ENCODE measurements at regions of chr2 and their contacts with region 1.

Region 1: GRCh38 chr2:240832205-240832727 is 12.2 kb upstream of the KIF1A start:
- DNase-seq: peak; percentile 90 to 99 (median 97)
- H3K4me3 ChIP-seq: peak overlapping the region; percentile 23 to 73 (median 56)
- H3K27ac ChIP-seq: peak overlapping the region in 47 of 59 donors; percentile 10 to 80 (median 64)
- H3K27me3 ChIP-seq: no peaks in the 10 kb centered on the region
- CTCF ChIP-seq: peak in 6 of 56 donors; percentile 5 to 23 (median 10)

Region 2: DNA sequence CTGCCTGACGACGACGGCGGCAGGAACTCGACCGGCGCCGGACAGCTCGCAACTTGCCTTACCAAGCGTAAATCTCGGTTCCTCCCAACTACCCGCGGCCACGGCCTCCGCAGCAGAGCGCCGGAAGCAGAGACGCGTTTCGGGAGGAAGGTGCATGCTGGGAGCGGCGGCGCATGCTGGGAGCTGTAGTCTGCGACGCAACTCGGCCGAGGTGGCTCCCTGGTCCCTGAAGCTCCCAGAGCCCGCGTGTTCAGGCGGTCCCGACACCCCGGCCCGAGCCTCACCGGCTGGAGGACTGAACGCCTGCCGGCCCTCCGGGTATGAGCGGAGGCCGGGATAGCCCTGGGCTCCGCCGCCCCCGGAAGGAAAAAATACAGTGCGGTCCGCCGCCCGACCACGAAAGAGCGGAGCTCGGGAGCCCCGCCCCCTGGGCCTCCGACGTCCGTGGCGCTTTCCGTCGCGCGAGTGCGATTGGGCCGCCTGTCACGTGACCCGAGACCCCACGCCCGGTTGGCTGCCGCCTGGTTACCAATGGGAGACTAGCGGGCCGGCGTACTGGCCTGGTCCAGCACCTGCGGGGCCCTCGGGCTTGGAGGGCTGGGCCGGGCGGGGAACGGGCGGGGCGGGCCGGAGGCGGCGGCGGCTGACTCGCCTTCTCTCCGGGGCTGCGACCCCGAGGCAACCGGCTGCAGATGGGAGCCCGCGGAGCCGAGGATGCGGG is 245.9 kb before region 1 on chr2 and contains the start of gene CAPN10:
- intact Hi-C with region 1: loop called in 1 of 2 experiments (anchors 5 kb)
- DNase-seq: peak; percentile 97 to 99 (median 98)
- H3K4me3 ChIP-seq: peak within 1 kb of the TSS; percentile 60 to 100 (median 97)
- H3K27ac ChIP-seq: peak within 1 kb of the TSS; percentile 70 to 99 (median 96)
- H3K27me3 ChIP-seq: no peaks in the 10 kb centered on the region
- CTCF ChIP-seq: peak in 34 of 56 donors; percentile 6 to 64 (median 30)
- total RNA-seq, gene CAPN10: 25.6 to 70.0 (median 40.7) TPM

Region 3: DNA sequence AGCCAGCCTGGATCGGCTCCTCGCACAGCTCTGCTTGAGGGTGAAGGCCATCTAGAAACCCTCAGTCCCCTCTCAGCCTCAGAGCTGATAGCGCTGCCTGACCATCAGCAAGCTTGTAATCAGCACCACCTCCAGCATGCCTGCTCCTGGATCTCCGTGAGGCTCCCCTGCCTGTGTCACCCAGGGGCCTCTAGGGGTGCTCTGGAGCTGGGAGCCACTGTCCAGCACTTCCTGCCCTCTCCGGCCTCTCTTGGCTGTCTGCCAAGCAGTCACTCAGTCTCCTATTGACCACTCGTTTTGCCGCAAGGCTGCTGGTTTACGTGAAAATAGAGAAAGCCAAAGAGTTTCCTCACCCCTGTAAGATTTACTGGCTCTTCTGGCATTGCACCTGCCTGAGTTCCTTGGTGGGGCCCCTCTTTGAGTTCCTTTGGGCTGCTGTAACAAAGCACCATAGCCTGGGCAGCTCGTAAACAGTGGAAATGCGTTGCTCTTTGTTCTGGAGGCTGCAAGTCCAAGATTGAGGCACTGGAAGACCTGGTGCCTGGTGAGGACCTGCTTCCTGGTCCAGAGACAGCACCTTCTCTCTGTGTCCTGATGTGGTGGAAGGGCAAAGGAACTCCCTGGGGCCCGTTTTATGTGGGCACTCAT is 227.9 kb before region 1 on chr2:
- intact Hi-C with region 1: loop called in 1 of 2 experiments (anchors 5 kb)
- DNase-seq: peak; percentile 61 to 86 (median 84)
- H3K4me3 ChIP-seq: peak overlapping the region in 38 of 59 donors; percentile 0 to 59 (median 34)
- H3K27ac ChIP-seq: peak overlapping the region in 55 of 59 donors; percentile 7 to 86 (median 71)
- H3K27me3 ChIP-seq: no peaks in the 10 kb centered on the region
- CTCF ChIP-seq: peak in 55 of 56 donors; percentile 32 to 90 (median 73)

Region 4: GRCh38 chr2:240704651-240705050 is 127.6 kb before region 1 on chr2:
- intact Hi-C with region 1: no loop called
- DNase-seq: peak in 3 of 10 donors; percentile 40 to 63 (median 51)
- H3K4me3 ChIP-seq: no peak overlapping the region
- H3K27ac ChIP-seq: no peak overlapping the region
- H3K27me3 ChIP-seq: peaks cover 0 to 7% (median 0%) of the 10 kb centered on the region in 45 donors
- CTCF ChIP-seq: no peak

Region 5: GRCh38 chr2:240803191-240803590 is 29.1 kb before region 1 on chr2:
- intact Hi-C with region 1: loop called in 1 of 2 experiments (anchors 5 kb)
- DNase-seq: peak in 3 of 10 donors; percentile 2 to 35 (median 11)
- H3K4me3 ChIP-seq: no peak overlapping the region
- H3K27ac ChIP-seq: peak overlapping the region in 10 of 59 donors; percentile 10 to 75 (median 30)
- H3K27me3 ChIP-seq: no peaks in the 10 kb centered on the region
- CTCF ChIP-seq: no peak

Region 6: DNA sequence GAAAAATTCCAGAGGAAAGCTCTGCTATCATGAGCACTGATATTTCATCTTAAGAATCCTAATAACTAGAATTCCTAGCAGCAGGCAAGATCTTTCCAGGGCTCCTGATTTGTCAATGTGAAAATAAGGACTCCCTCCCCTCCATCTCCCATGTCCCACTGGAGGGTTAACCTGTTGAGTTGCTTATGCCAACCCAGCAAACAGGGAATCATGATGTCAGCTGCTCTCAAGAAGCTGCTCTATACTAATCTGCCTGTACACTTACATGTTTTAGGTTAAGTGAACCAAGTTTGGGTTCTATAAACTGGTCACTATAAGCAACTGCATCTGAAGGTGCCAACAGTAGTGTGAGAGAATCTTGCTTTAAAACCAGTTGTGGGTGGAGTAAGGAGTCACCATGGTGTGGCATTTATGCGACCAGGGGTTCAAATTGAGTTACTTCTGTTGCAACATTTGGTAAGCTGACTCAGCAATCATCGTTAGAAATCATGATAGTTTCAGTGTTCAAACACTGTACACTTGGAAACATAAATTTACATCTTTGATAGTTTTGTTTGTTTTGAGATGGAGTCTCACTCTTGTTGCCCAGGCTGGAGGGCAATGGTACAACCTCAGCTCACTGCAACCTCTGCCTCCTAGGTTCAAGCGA is 622.7 kb after region 1 on chr2:
- intact Hi-C with region 1: no loop called
- DNase-seq: no peak
- H3K4me3 ChIP-seq: no peak overlapping the region
- H3K27ac ChIP-seq: no peak overlapping the region
- H3K27me3 ChIP-seq: no peaks in the 10 kb centered on the region
- CTCF ChIP-seq: no peak

Region 7: GRCh38 chr2:241508240-241509154 is 676.2 kb after region 1 on chr2 and contains the start of gene STK25:
- intact Hi-C with region 1: loop called in 1 of 2 experiments (anchors 10 kb)
- DNase-seq: peak; percentile 93 to 99 (median 97)
- H3K4me3 ChIP-seq: peak within 1 kb of the TSS; percentile 56 to 100 (median 90)
- H3K27ac ChIP-seq: peak within 1 kb of the TSS; percentile 66 to 97 (median 90)
- H3K27me3 ChIP-seq: no peaks in the 10 kb centered on the region
- CTCF ChIP-seq: peak in 23 of 56 donors; percentile 6 to 54 (median 29)
- total RNA-seq, gene STK25: 138 to 233 (median 178) TPM

Measured in dorsolateral prefrontal cortex (tissue), 120 donors.